Breast epithelium (tissue), 4 donors: ENCODE measurements at regions of chr9 and their contacts with region 1.

Region 1: GRCh38 chr9:19999491-20000057 is 210.7 kb upstream of the SLC24A2 start:
- DNase-seq: no peak
- H3K4me3 ChIP-seq: no peak overlapping the region
- H3K27ac ChIP-seq: no peak overlapping the region
- H3K4me1 ChIP-seq: no peaks in the 10 kb centered on the region
- H3K27me3 ChIP-seq: no peaks in the 10 kb centered on the region
- CTCF ChIP-seq: no peak
- POLR2A ChIP-seq: no peak

Region 2: DNA sequence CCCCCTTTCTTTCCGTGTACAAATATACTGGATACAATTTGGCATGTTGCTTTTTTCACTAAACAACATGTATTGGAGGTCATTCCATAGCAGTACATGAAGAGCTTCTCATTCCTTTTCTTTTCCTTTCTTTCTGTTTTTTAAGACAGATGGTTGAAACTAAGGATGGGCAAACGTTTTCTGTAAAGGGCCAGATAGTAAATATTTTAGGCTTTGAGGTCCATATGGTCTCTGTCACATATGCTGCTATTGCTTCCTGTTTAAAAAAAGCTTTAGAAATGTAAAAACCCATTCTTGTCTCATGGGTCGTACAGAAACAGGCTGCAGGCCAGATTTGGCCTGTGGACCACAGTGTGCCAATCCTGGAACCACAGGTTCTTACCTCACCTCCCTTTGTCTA is 430.6 kb before region 1 on chr9:
- intact Hi-C with region 1: loop called (anchors 10 kb)
- DNase-seq: no peak
- H3K4me3 ChIP-seq: no peak overlapping the region
- H3K27ac ChIP-seq: no peak overlapping the region
- H3K4me1 ChIP-seq: no peaks in the 10 kb centered on the region
- H3K27me3 ChIP-seq: no peaks in the 10 kb centered on the region
- CTCF ChIP-seq: no peak
- POLR2A ChIP-seq: no peak